ENCODE measurements at regions of chr21 and their contacts with region 1.

Region 1: DNA sequence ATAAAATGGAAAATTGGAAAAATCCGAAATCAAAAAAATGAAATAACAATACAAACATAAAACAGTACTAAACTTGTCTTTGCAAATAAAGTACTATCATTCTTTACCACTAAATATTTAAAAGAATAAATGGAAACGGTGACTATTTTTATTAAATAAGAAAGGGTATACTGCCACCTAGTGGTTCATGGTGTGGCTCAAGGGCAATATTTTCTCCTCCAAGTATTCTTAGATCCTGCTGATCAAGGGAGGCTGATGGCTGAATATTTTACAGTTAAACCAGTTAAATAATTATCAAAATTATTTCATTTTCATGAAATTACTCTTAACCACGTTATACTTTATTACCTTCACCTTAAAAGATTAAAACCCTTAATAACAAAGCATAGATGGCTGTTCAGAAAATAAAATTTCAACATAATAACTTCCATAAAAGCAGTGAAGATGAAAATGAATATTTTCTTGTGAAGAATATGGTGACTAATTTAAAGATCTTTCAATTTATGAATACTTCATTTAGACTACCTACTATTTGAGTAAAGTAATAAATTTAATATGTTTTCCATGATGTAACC is 1793.9 kb downstream of the NCAM2 start:
- DNase-seq: no peak
- ATAC-seq: no peak
- H3K4me3 ChIP-seq: no peak overlapping the region
- H3K27ac ChIP-seq: no peak overlapping the region
- H3K4me1 ChIP-seq: no peaks in the 10 kb centered on the region
- H3K27me3 ChIP-seq: no peaks in the 10 kb centered on the region
- CTCF ChIP-seq: peak; percentile 52 to 89 (median 82)

Region 2: GRCh38 chr21:21163904-21164303 is 1628.2 kb before region 1 on chr21:
- intact Hi-C with region 1: loop called in 2 of 10 experiments (anchors 5 to 10 kb)
- DNase-seq: peak in 1 of 2 donors; percentile 31
- ATAC-seq: peak in 4 of 8 donors; percentile 36 to 79 (median 65)
- H3K4me3 ChIP-seq: no peak overlapping the region
- H3K27ac ChIP-seq: no peak overlapping the region
- H3K4me1 ChIP-seq: peaks cover 0 to 6% (median 0%) of the 10 kb centered on the region in 9 donors
- H3K27me3 ChIP-seq: no peaks in the 10 kb centered on the region
- CTCF ChIP-seq: peak in 7 of 9 donors; percentile 48 to 67 (median 59)

Region 3: GRCh38 chr21:21232320-21232719 is 1559.8 kb before region 1 on chr21:
- intact Hi-C with region 1: loop called in 1 of 10 experiments (anchors 10 kb)
- DNase-seq: no peak
- ATAC-seq: no peak
- H3K4me3 ChIP-seq: no peak overlapping the region
- H3K27ac ChIP-seq: no peak overlapping the region
- H3K4me1 ChIP-seq: no peaks in the 10 kb centered on the region
- H3K27me3 ChIP-seq: no peaks in the 10 kb centered on the region
- CTCF ChIP-seq: peak in 7 of 9 donors; percentile 30 to 56 (median 37)

Region 4: DNA sequence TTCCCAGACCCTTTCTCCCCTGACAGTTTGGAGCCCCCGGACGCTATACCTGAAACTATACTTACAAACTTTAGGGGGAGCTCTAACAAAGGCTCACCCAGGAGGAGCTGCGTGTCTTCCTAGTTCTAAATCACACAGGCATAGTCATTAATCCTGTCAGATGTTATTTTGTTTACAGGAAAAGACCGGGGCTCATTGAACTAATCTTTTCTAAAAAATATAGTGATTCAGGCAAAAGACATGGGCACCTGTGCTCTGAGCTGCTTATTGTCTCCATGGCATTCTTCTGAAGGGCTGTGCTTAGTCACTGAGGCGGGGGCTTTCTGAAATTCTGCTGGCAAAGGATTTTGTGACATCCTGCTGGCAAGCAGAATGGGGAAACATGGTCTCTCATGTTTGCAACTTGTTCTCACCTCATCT is 216.9 kb before region 1 on chr21:
- intact Hi-C with region 1: loop called in 4 of 10 experiments (anchors 2 to 10 kb)
- DNase-seq: no peak
- ATAC-seq: peak in 1 of 8 donors; percentile 35
- H3K4me3 ChIP-seq: peak overlapping the region in 1 of 10 donors; percentile 16
- H3K27ac ChIP-seq: no peak overlapping the region
- H3K4me1 ChIP-seq: no peaks in the 10 kb centered on the region
- H3K27me3 ChIP-seq: no peaks in the 10 kb centered on the region
- CTCF ChIP-seq: peak in 7 of 9 donors; percentile 28 to 59 (median 50)

Measured in heart right ventricle (tissue), 16 donors.